Lower leg skin (tissue), 4 donors: ENCODE measurements at regions of chr19 and their contacts with region 1.

Region 1: GRCh38 chr19:28519952-28520861 is 692.7 kb downstream of the UQCRFS1 start:
- DNase-seq: no peak
- H3K4me3 ChIP-seq: no peak overlapping the region
- CTCF ChIP-seq: no peak
- POLR2A ChIP-seq: no peak

Region 2: DNA sequence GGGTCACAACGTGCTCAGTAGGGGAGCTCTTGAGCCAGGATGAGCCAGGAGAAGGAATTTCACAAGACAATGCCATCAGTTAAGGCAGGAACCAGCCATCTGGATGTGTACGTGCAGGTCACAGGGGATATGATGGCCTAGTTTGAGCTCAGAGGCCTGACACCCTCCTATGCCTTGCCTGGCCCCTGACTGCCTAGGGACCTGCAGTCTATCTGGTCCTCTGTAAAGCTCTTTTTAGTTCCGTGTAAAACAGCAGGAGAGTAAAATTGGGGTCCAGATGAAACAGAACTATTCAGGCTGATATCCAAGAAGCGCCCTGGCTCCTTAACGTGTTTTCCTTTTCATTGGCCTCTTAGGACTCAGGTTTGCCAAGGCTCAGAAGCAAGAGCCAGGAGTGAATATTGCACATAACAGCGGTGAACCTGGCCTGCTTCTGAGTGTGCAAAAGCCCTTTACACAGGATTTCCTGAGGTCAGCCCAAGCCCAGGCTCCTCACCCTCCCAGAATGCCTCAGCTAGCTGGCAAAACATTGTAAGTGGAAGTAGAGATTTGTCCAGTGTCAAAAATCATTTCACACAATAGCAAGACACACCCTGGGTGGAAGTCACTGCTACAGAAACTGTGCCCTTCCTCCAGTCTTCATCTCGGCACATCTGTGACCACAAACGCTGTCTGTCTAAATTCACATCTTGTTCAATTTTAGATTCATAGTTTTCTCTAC is 84.5 kb before region 1 on chr19:
- intact Hi-C with region 1: no loop called
- DNase-seq: no peak
- H3K4me3 ChIP-seq: no peak overlapping the region
- CTCF ChIP-seq: no peak
- POLR2A ChIP-seq: no peak

Region 3: GRCh38 chr19:28486926-28487325 is 33.3 kb before region 1 on chr19:
- intact Hi-C with region 1: loop called (anchors 1 kb)
- DNase-seq: no peak
- H3K4me3 ChIP-seq: no peak overlapping the region
- CTCF ChIP-seq: no peak
- POLR2A ChIP-seq: no peak

Region 4: DNA sequence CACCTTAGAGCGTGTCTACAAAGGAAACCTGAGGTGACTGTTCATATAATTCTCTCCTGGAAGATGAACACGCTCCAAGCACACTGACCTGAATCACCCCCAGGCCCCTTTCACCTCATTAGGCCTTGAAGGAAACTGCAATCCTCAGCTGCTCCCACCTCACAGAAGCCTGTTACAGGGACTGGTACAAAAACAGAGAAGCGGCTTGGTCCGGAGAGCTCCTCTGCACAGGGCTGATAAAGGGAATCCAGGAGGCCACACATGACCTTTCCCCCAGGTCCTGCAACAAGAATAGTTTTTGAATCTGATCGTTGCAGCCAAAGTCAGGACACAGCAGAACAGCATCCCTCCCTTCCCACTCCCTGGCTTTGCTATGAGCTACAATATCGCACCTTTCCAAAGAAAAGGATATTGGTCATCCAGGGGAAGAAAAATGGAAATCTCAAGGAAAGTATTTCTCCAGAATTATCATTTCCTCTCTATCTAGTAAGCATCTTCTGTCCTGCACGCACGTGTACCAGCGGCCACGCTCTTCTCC is 26.0 kb after region 1 on chr19:
- intact Hi-C with region 1: loop called (anchors 2 kb)
- DNase-seq: no peak
- H3K4me3 ChIP-seq: no peak overlapping the region
- CTCF ChIP-seq: no peak
- POLR2A ChIP-seq: no peak